Transverse colon (tissue), 4 donors: ENCODE measurements at regions of chr10 and their contacts with region 1.

Region 1: DNA sequence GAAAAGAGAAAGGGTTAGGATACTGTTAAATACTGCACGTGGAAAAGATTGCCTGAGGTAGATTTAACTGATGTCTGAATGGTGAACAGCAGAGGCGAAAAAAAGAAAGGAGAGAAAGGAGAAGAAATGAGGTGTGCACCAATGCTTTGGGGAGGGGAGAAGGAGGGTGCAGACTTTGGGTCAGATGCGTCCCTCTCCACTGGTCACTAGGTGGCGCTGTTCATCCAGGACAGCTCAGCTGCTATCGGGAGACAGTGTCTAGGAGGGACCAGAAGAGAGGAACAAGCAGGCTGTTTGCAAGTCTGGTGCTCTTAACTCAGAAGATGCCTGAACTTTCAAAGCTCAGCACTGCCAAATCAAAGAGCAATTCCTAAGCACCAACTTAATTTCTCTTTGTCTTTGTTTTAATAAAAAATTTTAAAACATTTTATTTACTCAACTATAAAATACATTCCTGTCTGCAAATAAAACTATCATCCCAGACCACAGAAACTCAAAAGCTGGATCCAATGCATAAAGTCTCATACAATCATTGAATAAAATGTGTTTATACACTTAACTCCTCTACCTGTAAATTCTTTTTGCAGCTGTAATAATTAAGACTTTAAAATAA is 83.9 kb upstream of the PDLIM1 start:
- DNase-seq: peak; percentile 82
- H3K4me3 ChIP-seq: no peak overlapping the region
- H3K27ac ChIP-seq: peak overlapping the region in 2 of 4 donors; percentile 7 to 32
- H3K4me1 ChIP-seq: peaks cover 0 to 12% (median 3%) of the 10 kb centered on the region in 4 donors
- H3K27me3 ChIP-seq: no peaks in the 10 kb centered on the region
- CTCF ChIP-seq: peak; percentile 86 to 92 (median 90)
- EP300 ChIP-seq: no peak
- POLR2A ChIP-seq: no peak

Region 2: GRCh38 chr10:94630017-94630688 is 744.5 kb before region 1 on chr10:
- in situ Hi-C with region 1: loop called in 1 of 4 experiments (anchors 25 kb)
- intact Hi-C with region 1: no loop called
- DNase-seq: no peak
- H3K4me3 ChIP-seq: no peak overlapping the region
- H3K27ac ChIP-seq: no peak overlapping the region
- H3K4me1 ChIP-seq: no peaks in the 10 kb centered on the region
- H3K27me3 ChIP-seq: no peaks in the 10 kb centered on the region
- CTCF ChIP-seq: peak; percentile 43 to 65 (median 58)
- EP300 ChIP-seq: no peak
- POLR2A ChIP-seq: no peak

Region 3: DNA sequence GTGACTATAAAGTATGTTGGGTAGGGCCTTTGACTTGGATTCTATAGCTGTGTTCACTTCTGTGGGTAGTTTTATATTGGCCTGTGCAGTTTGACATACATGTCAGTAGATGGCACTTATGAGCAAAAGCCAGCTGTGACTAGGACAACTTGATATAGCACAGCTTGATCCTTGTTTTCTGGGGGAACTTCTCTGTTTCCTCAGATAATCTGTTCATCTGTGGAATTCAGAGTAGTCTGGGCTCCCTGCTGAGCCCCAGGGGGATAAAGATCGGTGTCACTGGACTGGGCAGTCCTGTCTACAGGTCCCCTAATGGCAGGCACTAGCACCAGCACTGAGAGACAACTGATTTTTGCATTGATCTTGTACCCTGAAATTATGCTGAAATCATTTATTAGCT is 410.8 kb before region 1 on chr10:
- in situ Hi-C with region 1: no loop called
- intact Hi-C with region 1: no loop called
- DNase-seq: no peak
- H3K4me3 ChIP-seq: no peak overlapping the region
- H3K27ac ChIP-seq: no peak overlapping the region
- H3K4me1 ChIP-seq: no peaks in the 10 kb centered on the region
- H3K27me3 ChIP-seq: no peaks in the 10 kb centered on the region
- CTCF ChIP-seq: peak; percentile 40 to 60 (median 57)
- EP300 ChIP-seq: no peak
- POLR2A ChIP-seq: no peak

Region 4: DNA sequence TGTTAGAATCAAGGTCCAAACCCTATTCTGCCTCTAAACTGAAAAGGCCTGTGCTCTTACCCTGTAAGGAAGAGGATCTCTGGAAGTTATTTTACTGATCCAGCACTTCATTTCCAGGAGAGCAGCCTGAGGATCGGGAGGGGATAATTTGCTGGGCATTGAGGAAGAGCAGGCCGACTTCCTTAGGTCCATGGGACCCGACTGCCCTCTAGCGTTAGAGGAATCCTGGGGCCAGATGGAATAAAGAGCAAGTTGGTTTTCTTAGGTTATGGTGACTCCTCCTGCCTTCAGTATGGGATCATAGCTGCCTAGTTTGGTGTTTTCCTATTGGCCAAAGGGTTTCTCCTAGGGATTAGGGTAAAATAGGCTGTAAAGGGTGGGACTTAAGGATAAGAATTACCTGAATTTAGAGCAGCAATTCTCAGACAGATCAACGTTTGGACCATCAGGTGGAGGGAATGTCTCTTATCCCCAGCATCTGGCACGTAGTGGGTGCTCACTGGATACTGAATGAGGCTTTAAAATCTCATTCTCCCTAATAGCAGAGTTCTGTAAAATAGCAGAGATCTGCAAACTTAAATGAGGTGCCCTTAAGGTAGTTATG is 226.5 kb after region 1 on chr10:
- in situ Hi-C with region 1: loop called in 2 of 4 experiments (anchors 5 to 10 kb)
- intact Hi-C with region 1: loop called (anchors 5 kb)
- DNase-seq: peak; percentile 87
- H3K4me3 ChIP-seq: no peak overlapping the region
- H3K27ac ChIP-seq: peak overlapping the region; percentile 31 to 86 (median 68)
- H3K4me1 ChIP-seq: peaks cover 2 to 16% (median 10%) of the 10 kb centered on the region in 4 donors
- H3K27me3 ChIP-seq: no peaks in the 10 kb centered on the region
- CTCF ChIP-seq: peak; percentile 85 to 95 (median 93)
- EP300 ChIP-seq: no peak
- POLR2A ChIP-seq: no peak

Region 5: DNA sequence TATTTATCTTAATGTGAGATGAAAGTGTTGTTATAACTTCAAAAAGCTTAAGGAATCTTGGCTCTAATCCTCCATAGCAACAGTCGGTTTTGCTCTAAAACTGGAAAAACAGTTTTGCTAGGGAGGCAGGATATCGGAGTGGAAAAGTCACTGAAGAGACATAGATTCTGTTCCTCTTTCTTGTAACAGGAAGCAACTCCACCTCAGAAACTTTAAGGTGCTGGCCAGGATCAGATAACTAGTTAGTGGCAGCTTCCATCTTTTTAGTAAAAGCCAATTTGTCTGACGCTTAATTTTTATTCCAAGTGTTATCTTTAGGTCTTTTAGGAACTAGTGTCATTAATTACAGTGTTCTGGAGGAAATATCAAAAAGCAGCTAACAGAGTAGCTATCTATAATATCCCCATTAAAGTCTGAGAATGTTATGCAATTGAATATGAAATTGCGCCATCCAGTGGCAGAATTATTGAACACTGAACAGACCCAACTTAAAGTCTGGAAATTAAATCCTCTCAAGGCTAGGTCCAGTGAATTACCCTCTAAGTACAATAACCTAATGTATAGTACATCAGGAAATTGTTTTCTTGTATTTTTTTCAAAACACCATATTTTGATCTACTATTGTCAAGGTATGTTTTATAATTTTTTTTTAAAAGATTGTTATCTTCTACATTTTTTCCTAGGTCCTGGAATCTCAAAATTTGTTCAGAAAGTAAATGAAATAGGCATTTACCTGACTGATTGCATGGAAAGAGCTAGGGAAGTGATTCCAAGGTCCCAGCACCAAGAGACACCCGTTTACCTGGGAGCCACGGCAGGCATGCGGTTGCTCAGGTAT is 467.2 kb after region 1 on chr10:
- in situ Hi-C with region 1: loop called in 1 of 4 experiments (anchors 25 kb)
- intact Hi-C with region 1: no loop called
- DNase-seq: peak; percentile 44
- H3K4me3 ChIP-seq: no peak overlapping the region
- H3K27ac ChIP-seq: peak overlapping the region; percentile 30 to 56 (median 42)
- H3K4me1 ChIP-seq: peaks cover 3 to 31% (median 11%) of the 10 kb centered on the region in 4 donors
- H3K27me3 ChIP-seq: no peaks in the 10 kb centered on the region
- CTCF ChIP-seq: peak; percentile 65 to 84 (median 73)
- EP300 ChIP-seq: no peak
- POLR2A ChIP-seq: no peak